A673 (cell line): ENCODE measurements at regions of chr12 and their contacts with region 1.

Region 1: DNA sequence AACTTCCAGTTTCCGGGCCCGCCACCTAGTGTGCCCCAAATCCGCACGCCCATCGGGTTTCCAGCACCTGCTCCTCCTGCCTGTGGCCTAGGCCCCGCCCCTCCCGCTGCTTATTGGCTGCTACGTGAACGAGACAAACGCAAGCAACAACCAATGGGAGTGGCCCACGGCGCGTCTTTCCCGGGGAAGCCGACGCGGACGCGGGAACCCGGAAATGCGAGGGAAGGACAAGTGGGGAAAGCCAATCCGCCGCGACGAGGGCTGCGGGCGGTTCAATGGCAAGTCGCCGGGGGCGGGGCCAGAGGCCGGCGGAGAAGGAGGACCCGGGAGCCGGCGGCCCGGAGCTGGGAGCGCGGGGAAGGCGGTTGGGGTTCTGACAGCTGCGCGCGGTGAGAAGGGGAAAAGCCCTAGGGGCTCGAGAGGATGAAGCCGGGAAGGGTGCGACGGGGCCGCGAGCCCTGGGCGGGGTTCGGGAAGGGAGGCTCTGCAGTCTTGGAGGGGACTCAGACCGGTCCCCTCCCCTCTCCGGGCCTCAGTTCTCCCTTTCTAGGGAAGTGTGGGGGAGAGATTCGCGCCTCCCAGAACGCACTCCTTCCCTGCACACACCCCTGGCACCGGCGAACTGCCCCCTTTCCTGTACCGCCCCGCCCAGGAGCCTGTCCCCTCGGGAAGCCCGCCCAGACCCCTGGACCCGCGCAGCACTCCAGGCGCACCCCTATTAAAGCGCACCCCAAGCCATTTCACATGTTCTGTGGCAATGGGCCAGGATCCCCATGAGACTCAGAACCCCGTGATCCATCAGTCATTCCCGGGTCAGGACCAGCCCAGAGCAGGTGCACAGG is at the start of gene FICD:
- DNase-seq: peak; percentile 100
- H3K4me3 ChIP-seq: peak within 1 kb of the TSS; percentile 87
- H3K27ac ChIP-seq: peak within 1 kb of the TSS; percentile 62
- H3K4me1 ChIP-seq: peaks cover 12% of the 10 kb centered on the region
- H3K27me3 ChIP-seq: no peaks in the 10 kb centered on the region
- CTCF ChIP-seq: no peak
- total RNA-seq, gene FICD: 3.6 and 4.1 TPM in 2 replicates

Region 2: GRCh38 chr12:107912421-107913004 is 602.7 kb before region 1 on chr12:
- CTCF ChIA-PET with region 1: no interaction called
- POLR2A ChIA-PET with region 1: no interaction called
- intact Hi-C with region 1: loop called (anchors 10 kb)
- DNase-seq: peak; percentile 60
- H3K4me3 ChIP-seq: peak overlapping the region; percentile 21
- H3K27ac ChIP-seq: no peak overlapping the region
- H3K4me1 ChIP-seq: no peaks in the 10 kb centered on the region
- H3K27me3 ChIP-seq: peaks cover 54% of the 10 kb centered on the region
- CTCF ChIP-seq: peak; percentile 92

Region 3: GRCh38 chr12:107992870-107993451 is 522.2 kb before region 1 on chr12:
- CTCF ChIA-PET with region 1: no interaction called
- POLR2A ChIA-PET with region 1: no interaction called
- intact Hi-C with region 1: loop called (anchors 5 kb)
- DNase-seq: peak; percentile 62
- H3K4me3 ChIP-seq: no peak overlapping the region
- H3K27ac ChIP-seq: no peak overlapping the region
- H3K4me1 ChIP-seq: no peaks in the 10 kb centered on the region
- H3K27me3 ChIP-seq: peaks cover 36% of the 10 kb centered on the region
- CTCF ChIP-seq: peak; percentile 51

Region 4: GRCh38 chr12:108063192-108063591 is 452.0 kb before region 1 on chr12:
- CTCF ChIA-PET with region 1: no interaction called
- POLR2A ChIA-PET with region 1: no interaction called
- intact Hi-C with region 1: loop called (anchors 5 kb)
- DNase-seq: peak; percentile 57
- H3K4me3 ChIP-seq: no peak overlapping the region
- H3K27ac ChIP-seq: no peak overlapping the region
- H3K4me1 ChIP-seq: no peaks in the 10 kb centered on the region
- H3K27me3 ChIP-seq: peaks cover 5% of the 10 kb centered on the region
- CTCF ChIP-seq: peak; percentile 72

Region 5: DNA sequence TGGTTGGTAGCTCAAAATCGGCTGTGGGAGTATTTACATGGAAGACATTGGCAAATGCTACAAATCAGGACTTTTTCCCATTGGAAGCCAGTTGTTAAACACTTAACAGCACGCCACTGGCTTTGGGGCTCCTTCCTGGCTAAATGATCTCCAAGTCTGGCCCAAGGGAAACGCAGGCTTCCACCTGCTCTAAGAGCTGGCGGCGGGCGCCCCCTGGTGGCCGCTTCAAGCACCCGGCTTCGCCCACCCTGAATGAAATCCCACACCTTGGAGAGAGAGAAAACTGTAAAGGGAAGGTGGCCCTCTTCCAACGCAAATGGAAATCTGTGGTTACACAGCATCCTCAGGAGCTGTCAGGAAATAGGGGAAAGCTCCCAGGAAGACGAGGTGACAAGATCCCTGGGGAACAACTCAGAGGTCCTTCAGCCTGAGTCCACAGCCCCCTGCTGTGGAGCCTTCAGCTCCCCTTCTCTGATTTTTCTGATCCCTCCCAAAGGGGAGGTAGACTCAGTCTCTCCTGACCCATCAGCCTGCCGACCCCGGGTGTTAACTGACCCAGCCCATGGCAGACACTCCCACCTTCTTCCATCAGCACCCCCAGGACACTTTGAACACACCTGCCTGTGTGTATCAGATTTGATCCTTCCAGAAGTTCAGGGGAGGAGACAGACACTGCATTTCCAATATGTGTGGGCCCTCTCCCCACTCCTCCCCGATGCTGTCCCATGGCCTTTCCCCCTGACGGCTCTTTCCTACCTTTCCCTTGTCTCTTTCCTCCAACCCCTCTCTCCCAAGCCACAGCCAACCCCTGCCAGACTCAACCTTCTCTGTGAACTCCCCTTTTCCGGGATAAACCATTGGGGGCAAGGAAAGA is 103.1 kb after region 1 on chr12:
- CTCF ChIA-PET with region 1: interaction called, 5 read pairs
- POLR2A ChIA-PET with region 1: no interaction called
- intact Hi-C with region 1: loop called (anchors 5 kb)
- DNase-seq: peak; percentile 87
- H3K4me3 ChIP-seq: no peak overlapping the region
- H3K27ac ChIP-seq: no peak overlapping the region
- H3K4me1 ChIP-seq: peaks cover 8% of the 10 kb centered on the region
- H3K27me3 ChIP-seq: no peaks in the 10 kb centered on the region
- CTCF ChIP-seq: peak; percentile 97

Region 6: DNA sequence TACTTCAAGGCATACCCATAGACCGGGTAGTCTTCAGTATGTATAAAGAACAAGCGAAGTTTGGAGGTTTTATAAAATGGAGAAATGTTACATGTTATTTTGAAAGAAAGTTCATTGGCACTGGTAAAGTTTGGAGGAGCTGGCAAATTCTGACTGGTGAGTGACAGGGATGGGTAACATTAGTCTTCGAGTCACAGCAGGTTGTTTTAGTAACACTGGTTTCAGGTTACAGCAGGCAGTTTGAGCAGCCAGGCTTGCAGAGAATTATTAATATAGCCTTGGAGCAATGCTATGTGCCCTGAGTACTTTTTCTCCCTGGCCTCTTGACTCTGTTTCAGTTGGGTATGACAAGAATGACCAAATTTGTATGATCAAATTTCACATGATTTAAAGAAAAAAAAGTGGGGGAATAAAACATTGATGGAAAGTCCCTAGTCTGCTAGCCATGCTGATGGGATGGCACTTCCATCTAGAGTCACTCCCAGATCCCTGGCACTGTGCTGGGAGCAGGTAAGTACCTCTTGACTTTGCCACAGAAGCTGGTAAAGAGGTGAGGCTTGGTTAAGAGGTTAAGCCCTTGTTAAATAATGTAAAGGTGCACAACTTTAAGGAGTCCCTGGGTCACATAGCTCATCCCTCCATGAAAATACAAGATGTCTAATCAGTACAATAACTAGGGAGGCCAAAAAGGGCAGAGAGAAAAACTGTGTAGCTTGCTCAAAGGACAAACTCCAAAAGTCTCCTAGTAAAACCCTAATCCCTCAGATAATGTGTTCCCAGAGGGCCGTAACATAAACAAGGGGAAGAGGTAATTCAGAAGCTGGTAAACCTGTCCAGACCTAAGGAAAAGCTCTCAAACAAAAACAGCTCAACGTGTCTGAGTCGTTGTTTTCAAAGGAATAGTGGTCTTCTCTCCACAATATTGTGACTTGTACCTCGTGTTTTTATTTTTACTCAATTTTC is 518.3 kb after region 1 on chr12:
- CTCF ChIA-PET with region 1: no interaction called
- POLR2A ChIA-PET with region 1: no interaction called
- intact Hi-C with region 1: no loop called
- DNase-seq: no peak
- H3K4me3 ChIP-seq: no peak overlapping the region
- H3K27ac ChIP-seq: no peak overlapping the region
- H3K4me1 ChIP-seq: no peaks in the 10 kb centered on the region
- H3K27me3 ChIP-seq: peaks cover 16% of the 10 kb centered on the region
- CTCF ChIP-seq: no peak

Region 7: GRCh38 chr12:110312581-110313360 is 1797.6 kb after region 1 on chr12:
- CTCF ChIA-PET with region 1: no interaction called
- POLR2A ChIA-PET with region 1: no interaction called
- intact Hi-C with region 1: no loop called
- DNase-seq: peak; percentile 74
- H3K4me3 ChIP-seq: no peak overlapping the region
- H3K27ac ChIP-seq: peak overlapping the region; percentile 8
- H3K4me1 ChIP-seq: peaks cover 18% of the 10 kb centered on the region
- H3K27me3 ChIP-seq: no peaks in the 10 kb centered on the region
- CTCF ChIP-seq: no peak